ENCODE measurements at regions of chr2 and their contacts with region 1.

Region 1: DNA sequence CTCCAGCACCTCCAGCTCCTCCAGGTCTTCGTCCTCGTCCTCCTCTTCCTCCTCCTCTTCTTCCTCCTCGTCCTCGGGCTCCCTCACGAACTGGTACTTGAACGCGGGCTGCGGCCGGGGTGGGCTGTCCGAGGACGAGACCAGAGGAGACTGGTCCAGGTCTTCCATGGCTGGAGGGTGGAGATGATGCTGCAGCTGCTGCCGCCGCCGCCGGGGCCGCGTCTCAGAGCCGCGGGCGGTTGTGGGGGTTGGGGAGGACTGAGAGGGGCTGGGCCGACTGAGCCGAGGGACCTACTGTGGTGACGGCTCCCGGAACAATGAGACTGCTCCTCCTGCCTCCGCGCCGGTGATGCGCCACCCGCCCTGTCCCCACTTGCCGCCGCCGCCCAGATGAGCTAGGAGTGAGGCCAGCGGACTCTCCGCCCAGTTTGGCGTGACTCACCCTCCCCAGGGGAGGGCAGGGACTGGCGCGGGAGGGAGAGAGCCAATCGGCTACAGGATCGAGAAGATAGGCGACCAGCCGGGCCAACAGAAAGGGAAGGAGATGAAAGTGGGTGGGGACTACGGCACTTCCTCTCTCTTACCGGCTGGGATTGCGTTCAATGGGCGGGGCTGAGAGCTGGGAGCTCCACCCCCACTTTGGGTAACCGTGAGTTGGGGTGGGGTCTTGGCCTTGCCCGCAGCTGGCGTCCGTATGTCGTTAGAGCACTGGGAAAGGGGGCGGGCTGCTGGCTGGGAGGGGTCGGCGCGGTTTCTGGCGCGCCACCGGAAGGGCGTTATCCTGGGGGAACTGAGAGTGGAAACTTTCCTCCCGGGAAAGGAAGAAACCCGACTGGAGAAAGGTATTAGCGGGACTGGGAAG is at the start of gene RTN4:
- DNase-seq: peak; percentile 99
- ATAC-seq: peak; percentile 95
- H3K4me3 ChIP-seq: peak within 1 kb of the TSS; percentile 85 to 95
- H3K27ac ChIP-seq: peak within 1 kb of the TSS; percentile 90 to 91
- H3K4me1 ChIP-seq: no peaks in the 10 kb centered on the region
- H3K27me3 ChIP-seq: no peaks in the 10 kb centered on the region
- total RNA-seq, gene RTN4: 311 to 357 TPM

Region 2: DNA sequence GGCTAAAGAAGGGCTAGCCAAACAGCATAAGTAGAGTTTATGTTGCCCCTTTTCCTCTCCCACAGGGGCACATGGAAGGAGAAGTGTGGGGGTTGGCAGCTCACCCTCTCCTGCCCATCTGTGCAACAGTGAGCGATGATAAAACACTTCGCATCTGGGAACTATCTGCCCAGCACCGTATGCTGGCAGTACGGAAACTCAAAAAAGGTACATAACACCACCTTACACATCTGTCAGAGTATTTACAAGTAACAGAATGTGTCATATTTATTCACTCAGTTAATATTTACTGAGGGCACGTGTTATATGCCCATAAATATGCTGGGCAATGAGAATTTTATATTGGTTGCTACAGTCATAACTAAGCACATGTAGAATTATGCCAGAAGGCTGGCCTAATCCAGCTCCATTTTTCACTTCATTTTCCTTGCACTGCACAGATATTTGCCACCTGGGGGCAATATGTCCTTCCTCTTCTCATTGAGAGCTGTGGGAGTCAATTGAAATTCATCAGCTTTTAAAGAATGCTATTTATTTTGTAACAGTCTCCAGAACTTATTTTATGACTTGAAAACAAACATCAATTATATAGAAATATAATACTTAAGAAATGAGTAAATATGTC is 150.7 kb before region 1 on chr2:
- intact Hi-C with region 1: loop called in 1 of 2 experiments (anchors 10 kb)
- DNase-seq: no peak
- ATAC-seq: peak; percentile 75
- H3K4me3 ChIP-seq: no peak overlapping the region
- H3K27ac ChIP-seq: no peak overlapping the region
- H3K4me1 ChIP-seq: peaks cover 0 to 4% of the 10 kb centered on the region in 2 donors
- H3K27me3 ChIP-seq: no peaks in the 10 kb centered on the region

Region 3: GRCh38 chr2:55099878-55100820 is 49.8 kb after region 1 on chr2:
- intact Hi-C with region 1: loop called (anchors 2 to 5 kb)
- DNase-seq: no peak
- ATAC-seq: peak; percentile 83
- H3K4me3 ChIP-seq: peak overlapping the region in 1 of 2 donors; percentile 24
- H3K27ac ChIP-seq: peak overlapping the region; percentile 99
- H3K4me1 ChIP-seq: peaks cover 5 to 6% of the 10 kb centered on the region in 2 donors
- H3K27me3 ChIP-seq: no peaks in the 10 kb centered on the region

Region 4: DNA sequence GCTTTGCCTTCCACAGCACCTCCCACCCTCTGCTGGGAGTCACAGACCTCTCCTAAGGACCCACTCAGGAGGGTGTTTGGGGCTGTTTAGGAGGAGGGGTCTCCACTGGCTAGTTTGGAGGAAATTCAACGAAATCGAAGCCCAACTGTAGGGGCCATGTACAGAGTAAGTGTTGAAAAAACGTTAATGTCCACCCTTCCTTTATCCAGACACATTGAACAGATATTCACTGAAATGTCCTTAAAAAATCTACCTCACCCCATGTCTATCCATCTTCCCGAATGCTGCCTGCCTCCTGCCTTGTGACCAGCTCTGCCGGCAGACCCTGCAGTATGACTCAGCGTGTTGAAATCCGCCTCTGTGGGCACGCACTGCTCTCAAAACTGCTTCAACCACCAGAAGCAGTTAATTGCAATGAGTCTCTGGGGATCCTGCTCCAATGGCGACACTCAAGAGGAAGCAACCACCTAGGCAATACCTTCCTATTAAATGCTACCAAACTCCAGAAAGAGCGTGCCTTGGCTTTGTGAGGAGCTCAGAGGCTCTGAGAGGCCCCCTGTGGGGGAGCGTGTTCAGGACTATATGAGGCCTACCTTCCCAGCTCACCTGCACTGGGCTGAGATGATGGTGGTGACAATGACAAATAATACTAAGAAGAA is 61.3 kb after region 1 on chr2:
- intact Hi-C with region 1: loop called in 1 of 2 experiments (anchors 5 kb)
- DNase-seq: peak; percentile 89 to 92
- ATAC-seq: peak; percentile 86
- H3K4me3 ChIP-seq: no peak overlapping the region
- H3K27ac ChIP-seq: peak overlapping the region; percentile 78 to 95
- H3K4me1 ChIP-seq: peaks cover 4 to 5% of the 10 kb centered on the region in 2 donors
- H3K27me3 ChIP-seq: no peaks in the 10 kb centered on the region

Region 5: DNA sequence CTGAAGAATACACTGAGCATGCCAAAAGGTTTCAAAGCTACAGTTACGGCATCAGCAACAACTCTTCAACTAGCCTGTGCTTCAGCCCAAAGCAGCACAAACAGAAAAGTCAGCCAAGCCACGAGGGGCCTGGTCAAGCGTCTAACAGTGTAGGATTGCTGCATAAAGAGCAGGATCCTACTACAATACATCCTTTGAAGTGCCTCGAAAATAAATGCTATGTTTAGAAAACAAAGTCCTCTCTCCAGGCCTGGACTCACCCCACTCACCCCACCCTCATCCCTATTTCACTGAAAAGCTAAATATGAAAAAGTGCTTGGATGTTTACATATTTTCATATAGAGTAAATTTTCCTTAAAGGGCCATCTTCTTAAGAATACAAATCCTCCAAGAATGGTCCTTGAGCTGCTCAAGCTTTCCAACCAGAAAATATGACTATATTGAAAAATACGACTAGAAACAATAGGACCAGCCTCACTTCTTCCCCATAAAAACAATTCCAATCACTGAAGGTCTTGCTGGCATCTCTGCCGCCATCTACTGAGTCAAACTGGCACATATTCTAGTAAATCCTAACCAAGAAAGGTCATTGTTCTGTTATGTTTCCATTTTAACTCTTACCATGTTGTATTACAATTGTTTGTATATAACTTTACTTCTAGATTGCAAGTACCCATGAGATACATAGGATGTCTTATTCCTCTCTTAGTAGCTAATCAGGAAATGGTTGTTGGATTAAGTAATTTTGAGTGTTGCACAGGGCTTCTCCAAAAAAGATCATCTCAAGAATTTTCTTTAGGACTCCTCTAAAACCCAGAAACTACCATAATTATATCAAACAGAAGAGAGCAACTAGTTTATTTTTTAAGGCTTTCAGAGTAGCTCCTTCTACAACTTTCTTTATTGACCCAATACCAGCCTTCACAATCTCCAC is 118.1 kb after region 1 on chr2:
- intact Hi-C with region 1: loop called (anchors 2 kb)
- DNase-seq: peak in 1 of 2 donors; percentile 67
- ATAC-seq: peak; percentile 84
- H3K4me3 ChIP-seq: no peak overlapping the region
- H3K27ac ChIP-seq: peak overlapping the region; percentile 77 to 91
- H3K4me1 ChIP-seq: peaks cover 2 to 4% of the 10 kb centered on the region in 2 donors
- H3K27me3 ChIP-seq: no peaks in the 10 kb centered on the region